K562 (cell line): ENCODE measurements at regions of chr3 and their contacts with region 1.

Region 1: DNA sequence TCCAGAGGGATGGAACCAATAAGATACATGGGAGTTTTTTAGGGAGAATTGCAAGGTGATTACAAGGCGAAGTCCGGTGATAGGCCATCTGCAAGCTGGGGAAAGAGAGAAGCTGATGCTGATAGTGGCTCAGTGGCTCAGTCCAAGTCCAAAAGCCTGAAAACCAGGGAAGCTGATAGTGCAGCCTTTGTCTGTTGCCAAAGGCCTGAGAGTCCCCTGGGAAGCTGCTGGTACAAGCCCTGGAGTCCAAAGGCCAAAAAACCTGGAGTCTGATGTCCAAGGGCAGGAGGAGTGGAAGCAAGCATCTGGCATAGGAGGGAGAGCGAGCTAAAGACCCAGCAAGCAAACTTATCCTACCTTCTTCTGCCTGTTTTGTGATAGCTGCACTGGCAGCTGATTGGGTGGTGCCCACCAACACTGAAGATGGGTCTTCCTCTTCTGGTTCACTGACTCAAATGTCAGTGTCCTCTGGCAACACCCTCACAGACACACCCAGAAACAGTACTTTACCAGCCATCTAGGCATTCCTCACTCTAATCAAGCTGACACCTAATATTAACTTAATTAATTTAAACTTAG is 16.7 kb downstream of the TFG start:
- DNase-seq: no peak
- ATAC-seq: no peak
- H3K4me3 ChIP-seq: no peak overlapping the region
- H3K27ac ChIP-seq: no peak overlapping the region
- H3K4me1 ChIP-seq: no peaks in the 10 kb centered on the region
- H3K27me3 ChIP-seq: no peaks in the 10 kb centered on the region
- CTCF ChIP-seq: no peak
- EP300 ChIP-seq: no peak
- POLR2A ChIP-seq: no peak
- RAD21 ChIP-seq: no peak

Region 2: DNA sequence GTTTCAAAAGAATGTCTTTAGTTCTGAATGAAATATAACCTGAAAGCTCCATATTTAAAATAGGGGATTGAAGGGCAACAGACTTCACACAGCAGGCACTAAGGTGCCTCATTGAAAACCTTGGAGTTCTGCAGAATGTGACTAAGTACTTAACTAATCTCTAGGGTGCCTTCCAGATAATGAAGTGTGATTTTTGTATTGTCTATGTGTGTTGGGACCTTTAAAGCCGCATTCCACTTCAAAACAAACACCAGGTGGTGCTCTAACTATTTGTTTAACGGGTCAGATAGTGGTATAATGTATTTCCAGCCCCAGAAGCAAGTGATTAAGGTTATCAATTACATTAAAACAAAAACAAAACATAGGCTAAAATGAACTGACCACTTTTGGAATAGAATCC is 11.3 kb after region 1 on chr3:
- CTCF ChIA-PET with region 1: no interaction called
- POLR2A ChIA-PET with region 1: interaction called, 12 read pairs
- in situ Hi-C with region 1: no loop called
- intact Hi-C with region 1: no loop called
- DNase-seq: peak; percentile 13 to 19 (median 14)
- ATAC-seq: peak; percentile 76
- H3K4me3 ChIP-seq: no peak overlapping the region
- H3K27ac ChIP-seq: no peak overlapping the region
- H3K4me1 ChIP-seq: peaks cover 0 to 5% of the 10 kb centered on the region in 2 experiments; a peak in 2 of 5 replicates
- H3K27me3 ChIP-seq: no peaks in the 10 kb centered on the region
- CTCF ChIP-seq: peak in 2 of 3 experiments; percentile 32 to 36; a peak in 2 of 6 replicates
- EP300 ChIP-seq: no peak
- POLR2A ChIP-seq: no peak
- RAD21 ChIP-seq: peak; percentile 24 to 56; a peak in 3 of 4 replicates

Region 3: DNA sequence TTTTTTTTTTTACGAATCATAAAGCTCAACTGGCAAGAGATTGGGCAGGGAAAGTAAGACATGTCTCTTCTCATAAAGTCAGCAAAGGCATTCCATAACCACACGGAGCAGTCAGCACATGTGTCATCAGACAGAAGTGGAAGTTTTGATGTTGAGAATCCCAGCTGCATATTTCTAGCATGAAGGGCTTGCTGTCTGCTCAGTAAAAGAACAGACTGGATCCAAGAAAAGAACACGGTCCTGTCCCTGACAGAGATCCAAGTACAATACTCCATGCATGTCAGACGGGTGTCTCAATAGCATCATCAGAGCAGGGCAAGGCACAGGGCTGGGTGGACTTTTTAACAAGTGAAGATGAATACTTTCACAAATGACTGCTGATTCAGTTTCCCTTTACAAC is 229.0 kb after region 1 on chr3:
- CTCF ChIA-PET with region 1: no interaction called
- POLR2A ChIA-PET with region 1: no interaction called
- in situ Hi-C with region 1: no loop called
- intact Hi-C with region 1: no loop called
- DNase-seq: no peak
- ATAC-seq: no peak
- H3K4me3 ChIP-seq: no peak overlapping the region
- H3K27ac ChIP-seq: no peak overlapping the region
- H3K4me1 ChIP-seq: no peaks in the 10 kb centered on the region
- H3K27me3 ChIP-seq: no peaks in the 10 kb centered on the region
- CTCF ChIP-seq: no peak
- EP300 ChIP-seq: no peak
- POLR2A ChIP-seq: no peak
- RAD21 ChIP-seq: no peak